ENCODE measurements at regions of chr10 and their contacts with region 1.

Region 1: DNA sequence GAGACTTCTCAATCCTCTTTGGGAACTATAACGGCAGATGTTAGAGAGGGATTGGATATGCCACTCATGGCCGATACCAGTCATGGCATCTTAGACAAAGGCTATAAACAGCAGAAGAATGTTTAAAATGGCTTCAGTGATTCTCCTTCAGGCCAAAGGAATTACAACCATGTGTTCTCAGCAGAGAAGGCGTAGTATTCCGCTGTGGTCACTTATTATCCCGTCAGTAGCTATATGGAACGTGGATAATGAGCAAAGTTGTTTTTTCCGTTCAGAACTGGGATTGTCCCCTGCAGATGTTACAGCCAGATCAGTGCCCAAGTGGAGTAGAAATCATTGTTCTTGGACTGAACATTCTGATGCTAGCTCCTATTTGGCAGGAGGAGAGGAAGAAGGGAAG is 43.1 kb downstream of the TEX36 start:
- DNase-seq: no peak
- H3K4me3 ChIP-seq: no peak overlapping the region
- H3K27ac ChIP-seq: no peak overlapping the region
- H3K4me1 ChIP-seq: no peaks in the 10 kb centered on the region
- H3K27me3 ChIP-seq: no peaks in the 10 kb centered on the region
- CTCF ChIP-seq: no peak

Region 2: DNA sequence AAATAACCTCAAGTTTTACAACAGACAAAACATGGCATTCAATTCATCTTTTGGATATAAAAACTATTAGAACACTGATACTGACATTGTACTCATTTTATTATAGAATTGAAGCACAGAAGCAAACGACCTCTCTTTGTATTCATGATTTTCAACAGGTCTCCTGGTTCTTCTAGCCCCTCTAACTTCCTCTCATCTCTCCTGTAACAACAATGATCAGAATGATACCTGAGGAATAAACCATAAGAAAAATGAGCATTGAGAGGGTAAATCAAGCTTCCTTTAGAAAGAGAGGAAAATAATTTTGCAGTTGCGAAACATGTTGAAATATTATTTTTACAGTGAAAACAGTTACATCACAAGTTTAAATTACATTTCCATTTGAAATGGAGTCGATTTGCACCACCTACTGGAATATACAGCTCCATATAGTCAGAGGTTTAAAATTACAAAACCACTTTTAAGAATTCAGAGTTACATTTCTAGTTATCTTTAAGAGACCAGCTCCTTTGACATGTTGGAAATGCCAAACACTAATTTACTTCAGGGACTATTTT is 60.6 kb after region 1 on chr10:
- CTCF ChIA-PET with region 1: no interaction called
- dilution Hi-C with region 1: no loop called
- in situ Hi-C with region 1: no loop called
- intact Hi-C with region 1: loop called (anchors 2 kb)
- DNase-seq: no peak
- H3K4me3 ChIP-seq: no peak overlapping the region
- H3K27ac ChIP-seq: no peak overlapping the region
- H3K4me1 ChIP-seq: no peaks in the 10 kb centered on the region
- H3K27me3 ChIP-seq: no peaks in the 10 kb centered on the region
- CTCF ChIP-seq: peak in 1 of 2 donors; percentile 34

Measured in mammary epithelial cell (primary cell).